ENCODE measurements at regions of chr18 and their contacts with region 1.

Region 1: DNA sequence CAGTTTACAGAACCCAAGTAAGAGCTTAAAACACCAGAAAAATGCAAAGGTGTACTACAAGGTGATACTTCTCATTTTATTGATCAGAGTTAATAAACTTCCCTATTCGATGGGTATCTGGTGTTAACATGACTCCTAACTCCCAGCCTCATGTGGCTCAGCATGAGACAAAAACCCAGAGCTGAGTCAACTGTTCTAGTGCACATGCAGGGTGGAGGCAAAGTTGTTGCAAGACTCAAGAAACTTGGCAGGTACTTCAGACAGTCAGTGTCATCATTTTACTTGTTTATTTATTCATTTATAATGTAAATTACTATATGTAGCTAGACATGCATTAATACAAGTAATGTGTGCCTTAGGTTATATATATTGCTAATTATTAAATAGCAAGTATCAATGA is 216.6 kb upstream of the DSEL start:
- DNase-seq: peak; percentile 87
- H3K4me3 Mint-ChIP-seq: no peak overlapping the region
- H3K27ac Mint-ChIP-seq: no peak overlapping the region
- H3K4me1 Mint-ChIP-seq: peaks cover 21% of the 10 kb centered on the region
- H3K27me3 Mint-ChIP-seq: no peaks in the 10 kb centered on the region
- CTCF ChIP-seq: no peak

Region 2: GRCh38 chr18:67072791-67073190 is 660.3 kb before region 1 on chr18:
- CTCF ChIA-PET with region 1: no interaction called
- POLR2A ChIA-PET with region 1: no interaction called
- intact Hi-C with region 1: no loop called
- DNase-seq: no peak
- H3K4me3 Mint-ChIP-seq: no peak overlapping the region
- H3K27ac Mint-ChIP-seq: no peak overlapping the region
- H3K4me1 Mint-ChIP-seq: no peaks in the 10 kb centered on the region
- H3K27me3 Mint-ChIP-seq: peaks cover 75% of the 10 kb centered on the region
- CTCF ChIP-seq: no peak

Region 3: DNA sequence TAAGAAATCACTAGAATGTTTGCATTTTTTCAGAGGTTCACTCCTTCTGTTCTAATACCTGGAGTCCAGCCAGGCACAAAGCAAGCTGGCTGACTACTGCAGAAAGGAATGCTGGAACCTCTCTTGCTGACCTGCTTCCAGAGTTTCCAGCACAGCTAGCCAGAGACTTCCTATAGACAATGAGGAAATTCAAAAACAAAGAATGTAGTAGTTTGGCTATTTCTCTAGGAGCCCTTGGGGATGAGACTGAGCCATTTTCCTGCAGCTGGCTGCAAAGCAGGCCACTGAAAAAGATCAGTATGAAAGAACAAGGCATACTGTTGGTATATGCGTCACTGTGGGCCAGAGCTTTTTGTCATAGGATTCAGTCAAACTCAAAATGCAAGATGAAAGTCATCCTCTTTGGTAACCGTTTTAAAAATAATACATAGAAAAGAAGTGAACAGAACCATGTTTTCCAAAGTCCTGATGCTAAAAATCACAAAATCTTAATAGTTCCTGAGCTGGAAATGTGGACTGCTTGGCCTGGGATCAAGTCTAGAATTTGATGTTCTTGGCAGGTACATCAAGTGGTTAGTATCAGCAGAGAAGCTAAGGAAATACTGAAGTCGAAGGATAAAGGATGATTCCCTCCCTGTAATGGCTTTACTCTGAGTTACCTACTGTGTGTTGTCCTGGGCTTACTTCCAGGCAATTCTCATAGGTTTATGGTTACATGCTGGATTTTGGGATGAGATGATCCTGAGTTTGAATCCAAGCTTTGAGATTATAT is 207.6 kb before region 1 on chr18:
- CTCF ChIA-PET with region 1: no interaction called
- POLR2A ChIA-PET with region 1: interaction called, 56 read pairs
- intact Hi-C with region 1: loop called (anchors 2 kb)
- DNase-seq: peak; percentile 97
- H3K4me3 Mint-ChIP-seq: peak overlapping the region; percentile 45
- H3K27ac Mint-ChIP-seq: peak overlapping the region; percentile 91
- H3K4me1 Mint-ChIP-seq: peaks cover 41% of the 10 kb centered on the region
- H3K27me3 Mint-ChIP-seq: no peaks in the 10 kb centered on the region
- CTCF ChIP-seq: no peak

Region 4: DNA sequence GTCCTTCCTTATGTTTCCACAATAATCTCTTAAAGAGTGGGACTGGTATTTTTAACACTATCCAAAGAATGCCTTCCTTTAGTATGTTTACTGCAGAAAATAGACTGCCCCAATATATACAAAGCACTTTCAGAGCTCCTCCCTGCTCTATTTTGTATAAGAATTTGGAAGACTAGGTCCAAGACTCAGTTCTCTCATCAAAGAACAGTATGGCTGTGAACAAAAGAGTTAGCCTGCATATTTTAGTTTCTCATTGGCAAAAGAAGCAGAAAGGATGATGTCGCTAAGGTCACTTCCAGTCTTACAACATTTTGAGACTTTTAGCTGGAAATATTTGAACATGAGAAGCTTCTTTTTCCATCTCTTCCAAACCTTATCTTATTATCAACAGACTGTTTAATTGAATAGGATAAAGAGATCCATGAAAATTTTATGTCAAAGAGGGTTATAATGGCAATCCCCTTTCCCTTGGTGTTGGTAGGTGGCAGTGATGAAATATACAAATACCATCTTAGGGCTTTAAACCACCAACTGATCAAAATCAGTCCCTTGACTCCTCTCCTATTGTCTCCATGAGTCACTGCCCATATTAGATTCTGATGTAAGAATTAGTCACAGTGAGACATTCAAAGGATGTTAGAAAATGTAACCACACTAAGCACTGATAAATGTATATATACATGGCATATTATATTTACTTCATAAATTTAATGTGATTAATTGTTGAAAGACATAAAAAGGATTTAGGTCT is 50.3 kb after region 1 on chr18:
- CTCF ChIA-PET with region 1: no interaction called
- POLR2A ChIA-PET with region 1: interaction called, 5 read pairs
- intact Hi-C with region 1: loop called (anchors 2 kb)
- DNase-seq: peak; percentile 83
- H3K4me3 Mint-ChIP-seq: no peak overlapping the region
- H3K27ac Mint-ChIP-seq: peak overlapping the region; percentile 5
- H3K4me1 Mint-ChIP-seq: peaks cover 7% of the 10 kb centered on the region
- H3K27me3 Mint-ChIP-seq: no peaks in the 10 kb centered on the region
- CTCF ChIP-seq: no peak

Region 5: GRCh38 chr18:68083131-68083530 is 350.0 kb after region 1 on chr18:
- CTCF ChIA-PET with region 1: no interaction called
- POLR2A ChIA-PET with region 1: no interaction called
- intact Hi-C with region 1: no loop called
- DNase-seq: peak; percentile 1
- H3K4me3 Mint-ChIP-seq: no peak overlapping the region
- H3K27ac Mint-ChIP-seq: no peak overlapping the region
- H3K4me1 Mint-ChIP-seq: no peaks in the 10 kb centered on the region
- H3K27me3 Mint-ChIP-seq: no peaks in the 10 kb centered on the region
- CTCF ChIP-seq: no peak

Measured in MCF 10A (cell line).